ENCODE measurements at regions of chr10 and their contacts with region 1.

Region 1: DNA sequence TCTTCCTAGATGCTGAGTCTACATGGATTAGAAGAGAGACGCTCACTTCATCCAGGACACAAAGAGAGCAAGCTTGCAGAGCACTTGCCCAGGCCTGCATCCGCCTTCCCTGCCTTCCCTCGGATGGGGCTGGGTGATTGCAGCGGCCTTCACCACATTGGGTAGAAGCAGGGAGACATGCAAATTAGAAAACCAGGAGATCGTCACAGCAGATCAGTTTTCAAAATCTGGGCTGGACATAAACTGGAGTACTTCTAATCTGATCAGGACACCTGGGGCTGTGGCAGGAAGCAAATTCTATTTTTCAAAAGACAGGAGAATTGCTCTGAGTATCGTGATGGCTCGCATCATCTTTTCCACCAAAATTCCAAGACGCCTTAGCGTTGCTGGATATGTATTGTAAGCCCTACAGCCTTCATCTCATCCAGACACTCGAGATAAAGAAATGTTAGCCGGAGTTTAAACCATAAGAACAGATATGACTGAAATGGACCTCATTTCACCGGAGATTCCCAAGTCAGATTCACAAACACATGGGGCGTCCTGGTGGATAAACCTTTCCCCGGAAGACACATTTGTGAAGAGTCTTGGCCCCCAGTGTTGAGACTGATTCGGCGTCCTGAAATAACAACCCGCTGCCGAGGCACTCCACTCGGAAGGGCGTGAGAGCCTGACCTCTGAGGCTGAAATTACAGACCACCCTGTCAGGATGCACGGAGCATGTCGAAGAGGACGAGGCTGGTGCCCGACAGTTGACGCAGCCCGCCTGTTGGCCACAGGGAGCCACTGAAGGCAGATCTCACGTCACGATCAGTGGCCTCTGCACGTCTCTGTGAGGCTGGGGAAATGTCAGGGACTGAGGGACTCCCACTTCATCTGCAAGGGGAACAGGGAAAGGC is 91.2 kb upstream of the PARD3 start:
- DNase-seq: no peak
- H3K4me3 ChIP-seq: no peak overlapping the region
- CTCF ChIP-seq: no peak

Region 2: DNA sequence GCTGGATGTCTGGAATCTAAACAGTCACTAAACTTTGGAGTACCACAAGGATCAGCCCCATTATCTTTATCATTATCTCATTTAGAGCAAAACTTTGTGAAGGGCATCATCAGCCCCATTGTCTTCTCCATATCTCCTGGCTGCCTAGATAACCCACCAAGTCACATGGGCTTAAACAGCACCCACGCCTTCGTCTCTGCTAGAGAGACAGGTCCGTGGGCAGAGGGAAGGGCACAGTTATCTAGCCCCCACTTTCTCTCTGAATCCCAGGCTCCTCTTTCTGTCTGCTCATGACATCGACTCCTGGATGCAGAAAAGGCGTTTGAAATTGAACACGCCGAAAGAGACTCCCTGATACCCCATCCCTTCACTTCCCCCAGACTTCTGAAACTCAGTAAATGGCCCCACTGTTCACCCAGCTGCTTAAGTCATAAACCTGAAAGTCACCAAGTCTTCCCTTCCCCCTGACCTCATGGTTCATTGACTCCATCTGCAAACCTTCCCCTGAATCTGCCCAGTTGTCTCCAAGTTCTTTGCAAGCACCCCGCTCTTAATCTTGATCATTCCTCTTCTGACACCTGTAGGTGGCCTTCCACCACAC is 70.3 kb before region 1 on chr10:
- in situ Hi-C with region 1: loop called (anchors 5 kb)
- DNase-seq: no peak
- H3K4me3 ChIP-seq: no peak overlapping the region
- CTCF ChIP-seq: no peak

Region 3: GRCh38 chr10:34854147-34854601 is 52.1 kb before region 1 on chr10:
- in situ Hi-C with region 1: no loop called
- DNase-seq: peak; percentile 49
- H3K4me3 ChIP-seq: peak overlapping the region; percentile 20
- CTCF ChIP-seq: no peak

Region 4: GRCh38 chr10:34941471-34942357 is 35.4 kb after region 1 on chr10:
- in situ Hi-C with region 1: no loop called
- DNase-seq: no peak
- H3K4me3 ChIP-seq: no peak overlapping the region
- CTCF ChIP-seq: no peak

Region 5: DNA sequence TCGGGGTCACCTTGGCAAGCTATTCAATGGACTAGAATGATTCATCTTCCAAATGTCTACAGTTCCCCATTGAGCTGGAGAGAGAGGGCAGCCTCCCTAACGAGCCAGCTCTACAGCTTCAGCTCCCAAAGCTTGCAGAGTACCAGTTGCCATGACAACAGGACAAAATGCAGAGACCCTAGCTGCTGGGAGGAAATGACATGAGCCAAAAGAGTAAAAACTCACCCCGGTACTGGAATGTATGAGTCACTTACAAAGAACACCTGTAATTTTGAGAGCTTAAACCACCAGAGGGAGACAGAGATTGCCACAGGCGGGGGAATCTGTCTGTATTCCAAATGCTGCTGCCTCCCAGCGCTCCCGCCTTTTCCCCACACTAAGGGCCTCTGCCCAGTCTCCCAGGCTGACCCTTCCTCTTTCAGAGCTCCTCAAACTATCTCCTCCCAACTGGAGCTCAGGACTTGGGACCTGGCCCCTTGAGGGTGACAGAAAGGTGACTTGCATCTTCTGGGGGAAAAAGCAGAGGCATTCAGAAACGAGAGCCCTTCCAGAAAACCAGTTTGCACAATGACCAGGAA is 88.3 kb after region 1 on chr10:
- in situ Hi-C with region 1: loop called (anchors 5 kb)
- DNase-seq: peak; percentile 88
- H3K4me3 ChIP-seq: no peak overlapping the region
- CTCF ChIP-seq: peak; percentile 83

Region 6: DNA sequence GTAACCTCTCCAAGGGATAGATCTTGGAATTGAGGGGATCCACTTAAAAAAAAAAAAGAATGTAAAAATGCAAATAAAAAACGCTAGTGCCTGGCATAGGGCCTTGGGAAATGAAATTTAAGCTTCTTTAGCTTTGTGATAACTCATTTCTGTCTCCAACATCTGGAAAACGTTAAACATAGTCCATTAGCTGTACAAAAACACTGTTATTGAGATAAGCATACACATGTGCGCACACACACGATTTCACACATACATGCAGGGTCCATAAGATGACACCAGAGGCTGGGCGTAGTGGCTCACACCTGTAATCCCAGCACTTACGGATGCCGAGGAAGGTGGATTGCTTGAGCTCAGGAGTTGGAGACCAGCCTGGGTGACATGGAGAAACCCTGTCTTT is 197.6 kb after region 1 on chr10:
- in situ Hi-C with region 1: no loop called
- DNase-seq: no peak
- H3K4me3 ChIP-seq: no peak overlapping the region
- CTCF ChIP-seq: no peak

Measured in astrocyte of the cerebellum (primary cell).